ENCODE measurements at regions of chr5 and their contacts with region 1.

Region 1: DNA sequence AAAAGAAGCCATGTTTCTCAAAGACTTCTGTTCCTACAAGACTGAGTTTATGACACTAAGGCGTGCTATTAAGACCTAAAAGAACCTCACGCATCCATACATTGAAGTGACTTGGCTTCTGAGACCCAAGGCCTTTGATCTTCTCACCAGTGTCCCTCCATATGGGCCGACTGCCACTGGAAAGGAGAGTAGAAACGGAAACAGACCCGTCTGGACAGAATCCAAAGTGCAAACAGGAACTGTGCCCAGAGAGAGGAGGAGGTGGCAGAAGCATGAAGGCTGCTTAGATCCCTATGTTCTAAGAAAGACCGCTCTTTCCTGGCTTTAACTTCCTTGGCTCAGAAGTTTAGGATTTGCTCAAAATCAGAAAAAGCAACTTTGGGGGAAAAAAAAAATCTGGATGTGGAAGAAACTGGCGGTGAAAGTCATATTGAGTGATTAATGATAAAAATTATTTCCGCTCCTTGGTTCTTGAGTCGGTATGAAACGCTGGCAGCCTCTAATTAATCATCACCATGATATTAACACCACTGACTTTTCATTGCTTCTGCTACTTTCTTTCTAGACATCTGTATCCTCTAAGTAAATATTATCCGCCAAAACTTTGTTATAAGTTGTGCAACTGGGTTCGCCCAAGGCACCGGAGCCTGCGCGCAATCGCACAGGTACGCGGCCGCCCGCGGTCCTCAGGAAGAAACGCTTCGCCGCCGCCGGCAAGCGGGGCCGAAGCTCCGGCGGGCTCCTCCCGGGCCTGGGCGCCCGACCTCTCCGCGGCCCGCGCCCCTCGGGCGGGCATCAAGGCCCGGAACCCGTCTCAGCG is 728 bp downstream of the DAP start:
- DNase-seq: no peak
- H3K4me3 ChIP-seq: peak overlapping the region; percentile 71
- H3K27ac ChIP-seq: peak overlapping the region; percentile 75
- H3K27me3 ChIP-seq: no peaks in the 10 kb centered on the region
- CTCF ChIP-seq: no peak

Region 2: DNA sequence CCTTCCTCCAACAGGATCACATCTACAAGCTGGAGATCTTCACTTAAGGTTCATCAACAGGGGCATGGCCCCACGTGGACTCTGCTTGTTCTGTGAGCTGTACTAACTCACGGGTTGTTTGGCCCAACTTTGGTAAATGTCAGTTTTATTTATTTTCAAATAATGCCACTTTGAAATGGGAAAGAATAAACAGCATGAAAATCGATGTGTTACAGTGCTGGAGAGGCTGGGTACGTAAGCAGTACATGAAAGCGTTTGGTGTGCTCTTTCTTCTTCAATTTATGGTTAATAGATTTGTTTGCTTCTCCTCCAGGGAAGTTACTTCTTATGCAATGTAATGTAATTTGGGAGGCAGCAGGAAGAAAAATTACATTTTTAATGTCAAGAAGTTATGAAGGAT is 390.7 kb after region 1 on chr5:
- CTCF ChIA-PET with region 1: no interaction called
- POLR2A ChIA-PET with region 1: interaction called, 11 read pairs
- DNase-seq: no peak
- H3K4me3 ChIP-seq: no peak overlapping the region
- H3K27ac ChIP-seq: no peak overlapping the region
- H3K27me3 ChIP-seq: peaks cover 2% of the 10 kb centered on the region
- CTCF ChIP-seq: no peak

Measured in AG04450 (cell line).